Activated CD8-positive, alpha-beta T cell treated with anti-CD3 and anti-CD28 coated beads, Interleukin-2, amount 10 ng/mL, durations not matched to agents 7 days and 5 days (primary cell): ENCODE measurements at regions of chr22 and their contacts with region 1.

Region 1: DNA sequence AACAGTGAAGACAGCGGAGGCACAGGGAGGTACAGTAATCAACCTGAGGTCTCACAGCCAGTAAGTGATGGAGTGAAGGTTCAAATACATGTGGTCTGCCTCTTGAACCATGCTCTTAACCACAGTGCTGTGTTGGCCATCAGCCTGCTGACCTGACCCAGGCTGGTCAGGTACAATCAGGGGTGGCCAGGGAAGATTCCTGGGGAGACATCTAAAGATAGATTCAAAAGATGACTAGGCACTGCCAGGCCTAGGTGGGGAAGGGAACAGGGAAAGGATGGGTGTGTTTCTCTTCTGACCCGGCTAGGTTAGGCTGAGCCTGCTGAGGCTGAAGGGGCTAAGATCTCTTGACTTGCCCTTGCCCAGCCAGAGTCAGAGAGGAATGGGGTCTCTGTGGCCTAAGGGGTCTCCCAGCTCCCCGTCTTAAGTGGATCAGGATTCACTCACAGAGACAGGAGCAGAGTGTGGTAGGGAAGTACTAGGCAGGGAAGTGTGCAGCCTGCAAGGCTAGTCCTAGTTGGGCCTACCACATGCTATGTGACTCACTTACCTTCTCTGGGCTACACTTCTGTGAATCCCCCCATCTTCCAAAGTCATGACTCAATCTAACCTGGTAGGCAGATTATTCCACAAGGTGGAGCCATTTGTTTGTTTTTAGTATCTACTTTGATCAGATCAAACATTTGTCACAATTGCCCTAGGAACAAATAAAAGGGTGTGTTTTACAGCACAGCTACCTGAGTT is 10.4 kb upstream of the SREBF2 start:
- DNase-seq: peak; percentile 53
- ATAC-seq: peak; percentile 81
- H3K4me3 Mint-ChIP-seq: no peak overlapping the region
- H3K27ac Mint-ChIP-seq: peak overlapping the region; percentile 66
- H3K4me1 Mint-ChIP-seq: peaks cover 19% of the 10 kb centered on the region
- H3K27me3 Mint-ChIP-seq: no peaks in the 10 kb centered on the region

Region 2: DNA sequence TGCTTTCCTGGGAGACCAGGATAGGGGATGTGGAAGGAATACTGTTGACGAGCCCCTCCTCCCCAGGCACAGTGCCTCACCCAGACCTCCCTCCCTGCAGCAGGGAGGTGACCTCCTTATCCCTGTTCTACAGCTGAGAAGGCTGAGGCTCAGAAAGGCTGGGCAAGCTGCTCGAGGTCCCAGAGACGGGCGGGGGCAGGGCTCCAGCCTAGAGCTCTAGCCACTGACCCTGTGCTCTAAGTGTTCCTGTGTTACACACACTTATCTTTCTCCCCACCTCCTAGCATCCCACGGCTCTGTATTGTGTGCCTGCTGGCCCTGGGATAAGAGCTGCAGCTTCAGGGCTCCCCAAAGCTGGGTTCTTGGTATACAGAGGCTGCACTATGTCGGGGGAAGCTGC is 14.1 kb before region 1 on chr22:
- CTCF ChIA-PET with region 1: no interaction called
- POLR2A ChIA-PET with region 1: no interaction called
- DNase-seq: no peak
- ATAC-seq: no peak
- H3K4me3 Mint-ChIP-seq: no peak overlapping the region
- H3K27ac Mint-ChIP-seq: no peak overlapping the region
- H3K4me1 Mint-ChIP-seq: peaks cover 20% of the 10 kb centered on the region
- H3K27me3 Mint-ChIP-seq: no peaks in the 10 kb centered on the region

Region 3: GRCh38 chr22:41832553-41833368 is 10.3 kb after region 1 on chr22 and contains the start of gene SREBF2:
- CTCF ChIA-PET with region 1: interaction called, 11 read pairs
- POLR2A ChIA-PET with region 1: interaction called, 4 read pairs
- DNase-seq: peak; percentile 100
- ATAC-seq: peak; percentile 95
- H3K4me3 Mint-ChIP-seq: peak within 1 kb of the TSS; percentile 95
- H3K27ac Mint-ChIP-seq: peak within 1 kb of the TSS; percentile 100
- H3K4me1 Mint-ChIP-seq: peaks cover 41% of the 10 kb centered on the region
- H3K27me3 Mint-ChIP-seq: no peaks in the 10 kb centered on the region
- total RNA-seq, gene SREBF2: 93.0 to 93.7 TPM